IMR-90 (cell line): ENCODE measurements at regions of chr16 and their contacts with region 1.

Region 1: GRCh38 chr16:56866943-56867830 is 2.2 kb downstream of the SLC12A3 start:
- DNase-seq: peak; percentile 67
- ATAC-seq: peak; percentile 79
- H3K4me3 ChIP-seq: no peak overlapping the region
- H3K27ac ChIP-seq: no peak overlapping the region
- H3K4me1 ChIP-seq: no peaks in the 10 kb centered on the region; the same call in 1 of the 2 replicates
- H3K27me3 ChIP-seq: no peaks in the 10 kb centered on the region
- CTCF ChIP-seq: peak; percentile 76
- POLR2A ChIP-seq: no peak
- RAD21 ChIP-seq: peak; percentile 74

Region 2: DNA sequence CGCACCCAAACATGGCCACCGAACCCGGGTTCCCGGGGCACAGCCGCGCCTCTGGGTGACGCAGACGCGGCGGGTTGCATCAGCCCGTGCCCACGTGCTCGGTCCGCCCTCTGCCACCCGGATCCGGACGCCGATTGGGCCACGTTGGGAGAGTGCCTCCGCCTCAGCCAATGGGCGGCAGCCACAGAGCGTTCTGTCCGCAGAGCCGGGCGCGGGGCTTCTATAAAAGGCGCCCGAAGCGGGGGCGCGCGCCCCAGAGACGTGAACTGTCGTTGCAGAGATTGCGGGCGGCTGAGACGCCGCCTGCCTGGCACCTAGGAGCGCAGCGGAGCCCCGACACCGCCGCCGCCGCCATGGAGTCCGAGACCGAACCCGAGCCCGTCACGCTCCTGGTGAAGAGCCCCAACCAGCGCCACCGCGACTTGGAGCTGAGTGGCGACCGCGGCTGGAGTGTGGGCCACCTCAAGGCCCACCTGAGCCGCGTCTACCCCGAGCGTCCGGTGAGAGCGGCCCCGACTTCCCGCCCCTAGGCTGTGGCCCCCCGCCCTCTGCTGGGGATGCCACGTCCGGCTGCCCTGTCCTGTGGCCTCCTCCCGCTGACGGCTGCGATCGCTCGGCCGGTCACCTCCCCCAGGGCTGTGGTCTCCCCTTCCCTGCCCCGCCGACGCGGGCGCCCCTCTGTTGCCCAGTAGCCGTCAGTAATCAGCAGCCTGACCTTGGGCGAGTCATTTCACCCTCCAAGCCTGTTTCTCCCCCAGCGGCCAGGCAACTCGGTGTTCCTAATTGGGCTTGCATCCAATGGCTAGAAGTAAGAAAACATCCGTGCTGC is 64.9 kb after region 1 on chr16 and contains the start of gene HERPUD1:
- CTCF ChIA-PET with region 1: no interaction called
- POLR2A ChIA-PET with region 1: interaction called, 5 read pairs
- dilution Hi-C with region 1: no loop called
- in situ Hi-C with region 1: no loop called
- intact Hi-C with region 1: loop called (anchors 1 kb)
- DNase-seq: peak; percentile 97
- ATAC-seq: peak; percentile 94
- H3K4me3 ChIP-seq: peak within 1 kb of the TSS; percentile 63
- H3K27ac ChIP-seq: peak within 1 kb of the TSS; percentile 97
- H3K4me1 ChIP-seq: peaks cover 8% of the 10 kb centered on the region
- H3K27me3 ChIP-seq: no peaks in the 10 kb centered on the region
- CTCF ChIP-seq: no peak
- POLR2A ChIP-seq: peak; percentile 100
- RAD21 ChIP-seq: peak; percentile 1; the same call in 1 of the 2 replicates
- total RNA-seq, gene HERPUD1: 83.3 and 148 TPM in 2 replicates

Region 3: DNA sequence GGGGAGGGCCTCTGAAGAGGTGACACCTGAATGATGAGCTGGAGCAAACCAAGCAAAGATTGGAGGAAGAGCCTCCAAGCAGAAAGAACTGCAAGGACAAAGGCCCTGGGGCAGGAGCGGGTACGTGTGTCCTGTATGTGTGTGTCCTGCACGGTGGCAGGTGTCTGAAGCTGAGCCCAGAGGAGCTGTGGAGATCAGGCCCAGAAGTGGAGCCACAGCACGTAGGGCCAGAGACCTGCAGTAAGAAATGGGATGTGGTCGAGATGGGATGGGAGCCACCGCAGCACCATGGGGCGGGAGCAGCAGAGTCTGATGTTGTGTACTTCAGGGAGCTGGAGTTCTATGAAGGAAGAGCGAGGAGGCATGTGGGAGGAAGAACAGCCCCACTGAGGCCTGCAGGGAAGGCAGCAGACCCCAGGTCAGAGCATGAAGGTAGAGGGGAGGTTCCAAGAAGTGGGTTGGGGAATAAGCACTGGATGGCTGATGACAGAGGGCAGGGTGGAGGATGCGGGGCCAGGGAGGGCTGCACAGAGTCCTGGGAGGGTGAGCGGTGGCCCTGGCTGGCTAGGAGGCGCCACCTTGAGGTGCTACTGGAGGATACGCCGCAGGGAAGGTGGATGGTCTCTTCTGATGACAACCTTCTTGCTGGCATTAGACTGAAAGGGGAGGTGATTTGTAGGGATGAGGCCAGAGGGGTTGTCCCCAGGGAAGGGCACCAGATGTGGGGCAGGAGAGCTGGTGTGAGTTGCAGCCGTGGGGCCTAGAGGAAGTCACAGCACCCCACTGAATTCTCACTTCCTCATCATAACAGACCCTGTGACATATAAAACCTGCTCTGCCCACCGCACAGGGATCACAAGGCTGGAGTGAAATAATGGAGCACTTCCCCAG is 83.9 kb after region 1 on chr16:
- CTCF ChIA-PET with region 1: no interaction called
- POLR2A ChIA-PET with region 1: no interaction called
- dilution Hi-C with region 1: no loop called
- in situ Hi-C with region 1: loop called (anchors 5 kb)
- intact Hi-C with region 1: loop called (anchors 1 kb)
- DNase-seq: peak; percentile 51
- ATAC-seq: peak; percentile 85
- H3K4me3 ChIP-seq: no peak overlapping the region
- H3K27ac ChIP-seq: no peak overlapping the region
- H3K4me1 ChIP-seq: no peaks in the 10 kb centered on the region
- H3K27me3 ChIP-seq: no peaks in the 10 kb centered on the region
- CTCF ChIP-seq: peak; percentile 70
- POLR2A ChIP-seq: peak; percentile 14; the same call in 1 of the 2 replicates
- RAD21 ChIP-seq: peak; percentile 81

Region 4: DNA sequence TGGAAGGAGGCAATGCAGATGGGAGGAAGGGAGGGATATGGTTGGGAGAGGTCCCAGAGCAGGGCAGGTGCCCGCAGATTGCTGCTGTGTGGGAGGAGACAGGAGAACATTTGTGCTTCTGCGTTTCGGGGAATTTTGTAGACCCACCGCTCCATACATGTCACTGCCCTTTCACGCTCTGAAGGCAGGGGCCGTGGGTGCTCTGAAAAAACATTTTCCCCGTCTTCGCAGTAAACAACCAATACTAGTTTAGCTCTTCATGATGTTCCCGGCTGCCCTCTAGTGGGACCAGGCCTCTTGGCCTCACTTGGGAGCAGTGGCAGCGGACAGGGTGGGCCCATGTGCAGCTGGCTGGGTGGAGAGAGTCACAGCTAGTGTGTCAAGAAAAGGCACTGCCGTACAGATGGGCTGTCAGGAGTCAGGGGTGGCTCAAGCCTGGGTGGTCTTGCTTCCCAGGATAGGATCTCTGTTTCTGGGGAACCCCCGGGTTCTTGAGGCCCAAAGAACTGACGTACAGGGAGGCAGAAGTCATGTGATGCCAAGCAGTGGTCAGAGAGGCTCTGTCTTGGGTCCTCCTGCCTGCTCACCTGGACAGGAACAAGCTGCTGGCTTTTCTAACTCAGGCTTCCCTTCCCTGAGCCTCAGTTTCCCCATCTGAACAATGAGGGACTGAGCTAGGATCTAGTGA is 178.7 kb after region 1 on chr16:
- CTCF ChIA-PET with region 1: no interaction called
- POLR2A ChIA-PET with region 1: no interaction called
- dilution Hi-C with region 1: no loop called
- in situ Hi-C with region 1: loop called (anchors 10 kb)
- intact Hi-C with region 1: loop called (anchors 1 kb)
- DNase-seq: peak; percentile 60
- ATAC-seq: peak; percentile 95
- H3K4me3 ChIP-seq: no peak overlapping the region
- H3K27ac ChIP-seq: no peak overlapping the region
- H3K4me1 ChIP-seq: peaks cover 3% of the 10 kb centered on the region; the same call in 1 of the 2 replicates
- H3K27me3 ChIP-seq: no peaks in the 10 kb centered on the region
- CTCF ChIP-seq: peak; percentile 69
- POLR2A ChIP-seq: no peak
- RAD21 ChIP-seq: peak; percentile 68

Region 5: GRCh38 chr16:57167953-57168352 is 300.8 kb after region 1 on chr16:
- CTCF ChIA-PET with region 1: no interaction called
- POLR2A ChIA-PET with region 1: no interaction called
- dilution Hi-C with region 1: no loop called
- in situ Hi-C with region 1: no loop called
- intact Hi-C with region 1: loop called (anchors 5 kb)
- DNase-seq: peak; percentile 83
- ATAC-seq: peak; percentile 69
- H3K4me3 ChIP-seq: no peak overlapping the region
- H3K27ac ChIP-seq: no peak overlapping the region
- H3K4me1 ChIP-seq: no peaks in the 10 kb centered on the region
- H3K27me3 ChIP-seq: no peaks in the 10 kb centered on the region
- CTCF ChIP-seq: peak; percentile 78
- POLR2A ChIP-seq: no peak
- RAD21 ChIP-seq: peak; percentile 89